BJ (cell line): ENCODE measurements at regions of chr9 and their contacts with region 1.

Region 1: GRCh38 chr9:91291866-91292265 is 69.9 kb downstream of the AUH start:
- DNase-seq: no peak
- H3K4me3 ChIP-seq: no peak overlapping the region
- H3K27me3 ChIP-seq: no peaks in the 10 kb centered on the region
- CTCF ChIP-seq: no peak

Region 2: GRCh38 chr9:91245431-91246313 is 46.2 kb before region 1 on chr9:
- CTCF ChIA-PET with region 1: no interaction called
- POLR2A ChIA-PET with region 1: interaction called, 26 read pairs
- DNase-seq: no peak
- H3K4me3 ChIP-seq: no peak overlapping the region
- H3K27me3 ChIP-seq: no peaks in the 10 kb centered on the region
- CTCF ChIP-seq: no peak